ENCODE measurements at regions of chr12 and their contacts with region 1.

Region 1: GRCh38 chr12:57583008-57583831 is 7.8 kb upstream of the PIP4K2C start:
- DNase-seq: peak; percentile 88 to 94 (median 92)
- ATAC-seq: peak; percentile 98
- H3K4me3 ChIP-seq: no peak overlapping the region
- H3K27ac ChIP-seq: no peak overlapping the region
- H3K4me1 ChIP-seq: no peaks in the 10 kb centered on the region; a peak in 2 of 5 replicates
- H3K27me3 ChIP-seq: no peaks in the 10 kb centered on the region
- CTCF ChIP-seq: peak; percentile 97 to 99 (median 99)
- EP300 ChIP-seq: no peak; the same call in 1 of the 2 replicates
- POLR2A ChIP-seq: no peak
- RAD21 ChIP-seq: peak; percentile 91 to 96

Region 2: GRCh38 chr12:57389033-57389432 is 194.2 kb before region 1 on chr12:
- CTCF ChIA-PET with region 1: no interaction called
- POLR2A ChIA-PET with region 1: no interaction called
- in situ Hi-C with region 1: no loop called
- intact Hi-C with region 1: no loop called
- DNase-seq: no peak
- ATAC-seq: no peak; the same call in 2 of the 3 replicates
- H3K4me3 ChIP-seq: no peak overlapping the region
- H3K27ac ChIP-seq: no peak overlapping the region
- H3K4me1 ChIP-seq: peaks cover 0 to 9% of the 10 kb centered on the region in 2 experiments; a peak in 2 of 5 replicates
- H3K27me3 ChIP-seq: no peaks in the 10 kb centered on the region
- CTCF ChIP-seq: no peak
- EP300 ChIP-seq: no peak
- POLR2A ChIP-seq: no peak
- RAD21 ChIP-seq: no peak

Region 3: DNA sequence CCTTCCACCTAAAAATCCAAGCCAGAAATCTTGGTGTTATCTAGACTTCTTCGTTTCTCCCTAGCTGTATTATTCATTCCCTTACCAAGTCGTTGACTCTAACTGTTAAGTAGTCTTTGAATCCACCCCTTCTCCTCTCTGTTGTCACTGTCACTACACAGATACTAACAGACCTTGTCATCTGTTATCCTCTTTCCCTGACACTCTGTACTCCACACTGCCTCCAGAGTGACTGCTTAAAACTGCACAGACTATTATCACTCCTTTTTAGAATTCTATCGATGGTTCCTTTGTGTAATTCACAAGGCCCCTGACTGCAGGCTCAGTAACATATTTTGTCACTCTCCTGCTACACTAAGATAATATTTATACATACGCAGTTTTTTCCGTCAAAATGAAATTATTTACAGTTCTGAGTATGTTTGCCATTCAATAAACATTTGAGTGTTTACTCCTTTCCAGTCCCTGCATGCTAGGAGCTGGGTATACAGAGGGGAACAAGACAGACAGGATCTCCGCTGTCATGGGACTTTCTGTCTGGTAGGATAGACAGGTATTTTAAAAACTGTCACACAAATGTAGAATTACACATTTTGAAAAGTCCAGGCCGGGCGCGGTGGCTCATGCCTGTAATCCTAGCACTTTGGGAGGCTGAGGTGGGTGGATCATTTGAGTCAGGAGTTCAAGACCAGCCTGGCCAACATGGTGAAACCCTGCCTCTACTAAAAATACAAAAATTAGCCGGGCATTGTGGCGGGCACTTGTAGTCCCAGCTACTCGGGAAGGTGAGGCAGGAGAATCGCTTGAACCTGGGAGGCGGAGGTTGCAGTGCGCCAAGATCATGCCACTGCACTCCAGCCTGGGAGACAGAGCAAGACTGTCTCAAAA is 91.6 kb before region 1 on chr12:
- CTCF ChIA-PET with region 1: no interaction called
- POLR2A ChIA-PET with region 1: no interaction called
- in situ Hi-C with region 1: no loop called
- intact Hi-C with region 1: no loop called
- DNase-seq: peak in 1 of 4 experiments; percentile 32
- ATAC-seq: peak; percentile 36
- H3K4me3 ChIP-seq: no peak overlapping the region
- H3K27ac ChIP-seq: no peak overlapping the region
- H3K4me1 ChIP-seq: peaks cover 7 to 15% of the 10 kb centered on the region in 2 experiments
- H3K27me3 ChIP-seq: no peaks in the 10 kb centered on the region
- CTCF ChIP-seq: peak; percentile 14 to 30 (median 30); a peak in 2 of 6 replicates
- EP300 ChIP-seq: no peak
- POLR2A ChIP-seq: no peak
- RAD21 ChIP-seq: no peak

Region 4: GRCh38 chr12:57621497-57622292 is 38.5 kb after region 1 on chr12:
- CTCF ChIA-PET with region 1: interaction called, 36 read pairs
- POLR2A ChIA-PET with region 1: no interaction called
- in situ Hi-C with region 1: no loop called
- intact Hi-C with region 1: loop called (anchors 1 kb)
- DNase-seq: peak; percentile 75 to 87 (median 86)
- ATAC-seq: peak; percentile 93
- H3K4me3 ChIP-seq: peak overlapping the region; percentile 30
- H3K27ac ChIP-seq: no peak overlapping the region
- H3K4me1 ChIP-seq: peaks cover 27 to 41% of the 10 kb centered on the region in 2 experiments
- H3K27me3 ChIP-seq: no peaks in the 10 kb centered on the region
- CTCF ChIP-seq: peak; percentile 81 to 95 (median 92)
- EP300 ChIP-seq: no peak
- POLR2A ChIP-seq: no peak
- RAD21 ChIP-seq: peak; percentile 79 to 92

Region 5: GRCh38 chr12:57632694-57633477 is 49.7 kb after region 1 on chr12 and contains the start of gene B4GALNT1:
- CTCF ChIA-PET with region 1: interaction called, 14 read pairs
- POLR2A ChIA-PET with region 1: no interaction called
- in situ Hi-C with region 1: no loop called
- intact Hi-C with region 1: loop called (anchors 2 kb)
- DNase-seq: peak; percentile 80 to 83 (median 82)
- ATAC-seq: peak; percentile 94
- H3K4me3 ChIP-seq: peak within 1 kb of the TSS; percentile 79
- H3K27ac ChIP-seq: peak within 1 kb of the TSS; percentile 83
- H3K4me1 ChIP-seq: peaks cover 0 to 29% of the 10 kb centered on the region in 2 experiments; a peak in 3 of 5 replicates
- H3K27me3 ChIP-seq: no peaks in the 10 kb centered on the region
- CTCF ChIP-seq: peak; percentile 89 to 95 (median 92)
- EP300 ChIP-seq: no peak
- POLR2A ChIP-seq: peak; percentile 71
- RAD21 ChIP-seq: peak; percentile 66 to 77
- polyA plus RNA-seq, gene B4GALNT1: 1.0 to 1.7 TPM

Region 6: GRCh38 chr12:57693659-57694458 is 110.6 kb after region 1 on chr12 and contains the start of gene OS9:
- CTCF ChIA-PET with region 1: no interaction called
- POLR2A ChIA-PET with region 1: no interaction called
- in situ Hi-C with region 1: no loop called
- intact Hi-C with region 1: loop called (anchors 2 kb)
- DNase-seq: peak; percentile 99 to 100 (median 99)
- ATAC-seq: peak; percentile 99
- H3K4me3 ChIP-seq: peak within 1 kb of the TSS; percentile 82
- H3K27ac ChIP-seq: peak within 1 kb of the TSS; percentile 80
- H3K4me1 ChIP-seq: peaks cover 4 to 10% of the 10 kb centered on the region in 2 experiments; a peak in 3 of 5 replicates
- H3K27me3 ChIP-seq: no peaks in the 10 kb centered on the region
- CTCF ChIP-seq: peak; percentile 92 to 95 (median 94)
- EP300 ChIP-seq: no peak
- POLR2A ChIP-seq: peak; percentile 95
- RAD21 ChIP-seq: peak; percentile 69 to 70
- polyA plus RNA-seq, gene OS9: 4.6 to 7.9 TPM

Region 7: GRCh38 chr12:57729321-57729844 is 146.2 kb after region 1 on chr12:
- CTCF ChIA-PET with region 1: interaction called, 4 read pairs
- POLR2A ChIA-PET with region 1: no interaction called
- in situ Hi-C with region 1: no loop called
- intact Hi-C with region 1: loop called (anchors 1 kb)
- DNase-seq: no peak
- ATAC-seq: no peak
- H3K4me3 ChIP-seq: no peak overlapping the region
- H3K27ac ChIP-seq: no peak overlapping the region
- H3K4me1 ChIP-seq: peaks cover 0 to 17% of the 10 kb centered on the region in 2 experiments; a peak in 2 of 5 replicates
- H3K27me3 ChIP-seq: peaks cover 33 to 50% of the 10 kb centered on the region in 2 experiments
- CTCF ChIP-seq: no peak
- EP300 ChIP-seq: no peak
- POLR2A ChIP-seq: no peak
- RAD21 ChIP-seq: no peak

Region 8: DNA sequence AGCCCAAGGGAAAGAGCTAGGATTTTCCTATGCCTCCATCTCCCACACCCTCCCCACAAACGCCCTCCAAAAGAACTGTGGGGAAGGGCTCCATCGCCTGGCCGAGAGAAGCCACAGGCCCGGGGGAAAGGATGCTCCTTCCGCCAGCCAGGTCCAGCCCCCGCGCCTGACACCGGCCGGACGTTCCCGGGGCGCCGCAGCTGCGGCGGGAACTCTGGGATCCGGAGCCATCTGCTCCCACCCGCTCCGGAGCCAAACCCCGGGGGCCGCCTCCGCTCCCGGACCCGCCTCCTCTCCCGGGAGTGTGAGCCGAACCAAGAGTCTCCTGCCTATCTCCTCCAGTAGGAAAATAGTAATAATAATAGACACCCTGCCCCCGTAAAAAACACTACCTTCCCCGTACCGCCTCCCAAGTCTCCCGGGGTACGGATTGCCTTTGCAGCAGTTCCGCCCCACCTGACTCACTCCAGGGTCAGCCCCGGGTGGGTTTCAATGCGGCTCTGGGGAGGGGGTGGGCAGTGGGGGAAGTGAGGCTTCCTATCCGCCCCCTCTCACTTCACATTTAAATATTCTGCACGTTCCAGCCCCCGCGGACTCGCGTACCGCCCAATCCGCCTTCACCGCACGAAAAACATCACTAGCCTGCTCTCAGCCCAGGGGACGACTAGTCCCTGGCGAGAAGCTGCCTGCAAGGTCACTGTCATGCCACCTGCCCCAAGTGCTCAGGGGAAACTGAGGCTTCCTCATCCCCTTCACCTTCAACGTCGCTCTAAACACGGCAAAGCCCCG is 152.9 kb after region 1 on chr12:
- CTCF ChIA-PET with region 1: interaction called, 17 read pairs
- POLR2A ChIA-PET with region 1: no interaction called
- in situ Hi-C with region 1: no loop called
- intact Hi-C with region 1: loop called (anchors 1 kb)
- DNase-seq: peak; percentile 77 to 85 (median 82)
- ATAC-seq: peak; percentile 93
- H3K4me3 ChIP-seq: peak overlapping the region; percentile 38
- H3K27ac ChIP-seq: peak overlapping the region; percentile 11; the same call in 2 of the 3 replicates
- H3K4me1 ChIP-seq: peaks cover 9 to 31% of the 10 kb centered on the region in 2 experiments; a peak in 4 of 5 replicates
- H3K27me3 ChIP-seq: peaks cover 20 to 59% of the 10 kb centered on the region in 2 experiments
- CTCF ChIP-seq: peak; percentile 71 to 79 (median 79)
- EP300 ChIP-seq: no peak
- POLR2A ChIP-seq: no peak
- RAD21 ChIP-seq: peak; percentile 66 to 78

Region 9: GRCh38 chr12:57904848-57905811 is 321.9 kb after region 1 on chr12:
- CTCF ChIA-PET with region 1: interaction called, 17 read pairs
- POLR2A ChIA-PET with region 1: no interaction called
- in situ Hi-C with region 1: no loop called
- intact Hi-C with region 1: loop called (anchors 2 kb)
- DNase-seq: peak; percentile 81 to 90 (median 84)
- ATAC-seq: peak; percentile 95
- H3K4me3 ChIP-seq: no peak overlapping the region
- H3K27ac ChIP-seq: no peak overlapping the region
- H3K4me1 ChIP-seq: peaks cover 0 to 8% of the 10 kb centered on the region in 2 experiments; a peak in 3 of 5 replicates
- H3K27me3 ChIP-seq: no peaks in the 10 kb centered on the region
- CTCF ChIP-seq: peak; percentile 100
- EP300 ChIP-seq: 0 out of 2 replicates have a peak, but pooled peaks have one; percentile 31
- POLR2A ChIP-seq: no peak
- RAD21 ChIP-seq: peak; percentile 100

Region 10: DNA sequence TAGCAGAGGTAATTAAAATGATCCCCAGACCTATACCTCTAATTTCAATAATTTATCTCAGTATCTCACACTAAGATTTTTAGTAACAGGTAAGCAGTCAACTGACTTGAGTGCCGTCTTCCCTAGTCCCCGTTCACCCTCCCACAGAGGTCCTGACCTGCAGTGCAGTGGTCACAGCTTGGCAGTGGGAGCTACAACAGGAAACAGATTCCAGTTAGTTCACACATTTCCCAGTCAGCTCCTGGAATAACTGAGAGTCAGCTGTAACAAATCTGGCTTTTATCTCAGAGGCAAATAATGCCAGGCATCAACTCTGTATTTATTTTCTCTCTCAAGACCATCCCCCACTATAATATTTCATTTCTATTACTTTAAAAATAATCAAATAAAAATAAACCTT is 666.4 kb after region 1 on chr12:
- CTCF ChIA-PET with region 1: no interaction called
- POLR2A ChIA-PET with region 1: no interaction called
- in situ Hi-C with region 1: no loop called
- intact Hi-C with region 1: no loop called
- DNase-seq: no peak
- ATAC-seq: no peak
- H3K4me3 ChIP-seq: no peak overlapping the region
- H3K27ac ChIP-seq: no peak overlapping the region
- H3K4me1 ChIP-seq: no peaks in the 10 kb centered on the region
- H3K27me3 ChIP-seq: no peaks in the 10 kb centered on the region
- CTCF ChIP-seq: no peak
- EP300 ChIP-seq: no peak
- POLR2A ChIP-seq: no peak
- RAD21 ChIP-seq: no peak

Measured in K562 (cell line).